PC-3 (cell line): ENCODE measurements at regions of chrX and their contacts with region 1.

Region 1: GRCh38 chrX:149962859-149963757 is 24.8 kb upstream of the EOLA2 start:
- DNase-seq: peak; percentile 77
- ATAC-seq: peak; percentile 96
- H3K4me3 ChIP-seq: no peak overlapping the region
- H3K27ac ChIP-seq: no peak overlapping the region
- H3K4me1 ChIP-seq: 0 out of 2 replicates have a peak, but pooled peaks cover 6% of the 10 kb centered on the region
- H3K27me3 ChIP-seq: no peaks in the 10 kb centered on the region
- CTCF ChIP-seq: peak; percentile 88

Region 2: DNA sequence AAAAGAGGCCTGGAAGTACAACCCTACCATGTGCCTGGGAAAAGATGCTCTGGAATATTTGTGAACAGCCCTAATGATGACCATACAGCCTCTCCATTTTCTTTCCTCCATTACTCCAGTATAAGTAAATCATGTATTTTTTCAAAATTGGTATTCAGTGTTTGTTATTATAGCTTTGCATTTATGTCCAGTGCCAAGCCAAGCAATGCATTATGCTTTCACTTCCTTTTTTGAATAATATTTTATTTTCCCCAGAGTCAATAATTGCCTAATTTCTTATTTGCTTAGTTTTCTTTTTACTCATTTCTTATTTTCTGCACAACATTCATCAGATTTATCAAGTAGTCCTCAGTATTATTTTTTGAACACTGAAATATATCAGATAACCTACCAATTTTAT is 24.5 kb after region 1 on chrX:
- CTCF ChIA-PET with region 1: no interaction called
- POLR2A ChIA-PET with region 1: no interaction called
- intact Hi-C with region 1: no loop called
- DNase-seq: no peak
- ATAC-seq: no peak
- H3K4me3 ChIP-seq: no peak overlapping the region
- H3K27ac ChIP-seq: no peak overlapping the region
- H3K4me1 ChIP-seq: no peaks in the 10 kb centered on the region
- H3K27me3 ChIP-seq: no peaks in the 10 kb centered on the region
- CTCF ChIP-seq: no peak

Region 3: GRCh38 chrX:150032741-150033140 is 69.6 kb after region 1 on chrX:
- CTCF ChIA-PET with region 1: no interaction called
- POLR2A ChIA-PET with region 1: no interaction called
- intact Hi-C with region 1: loop called (anchors 5 kb)
- DNase-seq: peak; percentile 87
- ATAC-seq: peak; percentile 84
- H3K4me3 ChIP-seq: peak overlapping the region; percentile 33; the same call in 1 of the 2 replicates
- H3K27ac ChIP-seq: peak overlapping the region; percentile 76
- H3K4me1 ChIP-seq: peaks cover 50% of the 10 kb centered on the region
- H3K27me3 ChIP-seq: no peaks in the 10 kb centered on the region
- CTCF ChIP-seq: no peak

Region 4: GRCh38 chrX:150486011-150486410 is 522.9 kb after region 1 on chrX:
- CTCF ChIA-PET with region 1: no interaction called
- POLR2A ChIA-PET with region 1: no interaction called
- intact Hi-C with region 1: loop called (anchors 5 kb)
- DNase-seq: peak; percentile 61
- ATAC-seq: peak; percentile 71; the same call in 1 of the 2 replicates
- H3K4me3 ChIP-seq: no peak overlapping the region
- H3K27ac ChIP-seq: no peak overlapping the region
- H3K4me1 ChIP-seq: peaks cover 14% of the 10 kb centered on the region
- H3K27me3 ChIP-seq: no peaks in the 10 kb centered on the region
- CTCF ChIP-seq: peak; percentile 78

Region 5: DNA sequence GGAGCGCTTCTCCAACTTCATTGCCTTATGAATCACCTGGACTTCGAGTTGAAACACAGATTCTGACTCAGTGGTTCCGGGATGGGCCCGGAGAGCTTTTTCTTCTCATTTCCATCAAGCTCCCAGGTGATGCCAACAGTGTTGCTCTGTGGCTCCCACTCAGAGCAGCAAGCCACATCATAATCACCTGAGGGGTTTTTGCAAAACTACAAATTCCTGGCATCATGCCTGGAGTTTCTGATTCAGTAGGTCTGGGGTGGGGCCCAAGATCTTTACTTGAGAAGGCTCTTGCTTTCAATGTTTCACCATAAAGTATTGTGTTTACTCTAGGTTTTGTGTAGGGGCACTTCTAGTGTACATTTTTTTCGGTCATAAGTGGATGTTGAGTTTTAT is 612.3 kb after region 1 on chrX:
- CTCF ChIA-PET with region 1: no interaction called
- POLR2A ChIA-PET with region 1: no interaction called
- intact Hi-C with region 1: loop called (anchors 5 kb)
- DNase-seq: peak; percentile 98
- ATAC-seq: peak; percentile 79
- H3K4me3 ChIP-seq: peak overlapping the region; percentile 54; the same call in 1 of the 2 replicates
- H3K27ac ChIP-seq: peak overlapping the region; percentile 80
- H3K4me1 ChIP-seq: peaks cover 69% of the 10 kb centered on the region
- H3K27me3 ChIP-seq: no peaks in the 10 kb centered on the region
- CTCF ChIP-seq: no peak